ENCODE measurements at regions of chr16 and their contacts with region 1.

Region 1: GRCh38 chr16:70380861-70381603 is 34.3 kb downstream of the DDX19A start:
- DNase-seq: peak; percentile 99
- H3K4me3 ChIP-seq: peak overlapping the region; percentile 85
- H3K4me3 Mint-ChIP-seq: peak overlapping the region; percentile 92
- H3K27ac Mint-ChIP-seq: peak overlapping the region; percentile 97
- H3K4me1 ChIP-seq: peaks cover 9% of the 10 kb centered on the region; the same call in 1 of the 2 replicates
- H3K4me1 Mint-ChIP-seq: peaks cover 6% of the 10 kb centered on the region
- H3K27me3 ChIP-seq: no peaks in the 10 kb centered on the region
- H3K27me3 Mint-ChIP-seq: no peaks in the 10 kb centered on the region
- CTCF ChIP-seq: peak; percentile 35 to 75

Region 2: DNA sequence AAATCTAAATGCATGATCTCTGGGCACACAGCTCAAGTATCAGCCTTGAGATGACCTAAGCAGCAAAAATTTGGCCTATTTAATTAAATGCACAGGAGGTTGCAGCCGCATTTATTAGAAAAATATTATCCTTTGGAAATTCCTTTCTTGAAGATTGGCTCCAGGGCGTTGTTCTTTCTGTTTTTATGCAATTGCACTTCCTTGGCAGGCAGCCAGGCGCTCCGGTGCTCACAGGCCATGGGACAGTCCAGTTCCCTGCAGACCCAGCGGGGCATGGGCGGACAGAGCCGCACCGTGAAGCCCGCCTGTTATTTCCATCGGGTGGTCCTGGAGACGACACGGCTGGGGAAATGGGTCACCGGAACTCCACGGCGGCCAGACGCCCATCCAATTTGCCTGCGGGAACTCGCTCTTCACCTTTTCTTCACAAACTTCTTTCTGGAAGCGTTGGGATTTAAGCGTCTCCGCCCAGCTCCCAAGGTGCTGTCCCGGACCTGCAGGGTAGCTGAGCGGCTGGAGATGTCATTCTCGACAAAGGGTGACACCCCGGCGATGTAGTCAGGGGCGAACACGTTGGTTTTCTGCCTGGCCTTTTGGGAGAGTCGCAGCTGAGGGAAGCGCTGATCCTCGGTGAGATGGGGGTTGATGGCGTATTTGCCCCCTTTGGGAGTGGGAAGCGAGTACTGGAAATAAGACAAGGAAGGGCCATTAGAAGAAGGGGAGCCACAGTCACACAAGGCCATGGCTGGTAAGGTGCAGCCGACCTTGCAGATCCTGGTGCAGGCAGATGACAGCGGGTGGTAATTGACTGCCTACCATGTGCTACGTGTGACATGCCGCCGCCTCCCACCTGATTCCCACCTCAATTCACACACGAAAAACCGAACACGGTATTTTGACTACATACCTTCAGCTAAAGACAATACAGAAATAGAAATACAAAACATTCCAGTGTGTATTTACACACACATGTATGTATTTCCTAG is 638.8 kb before region 1 on chr16:
- CTCF ChIA-PET with region 1: no interaction called
- POLR2A ChIA-PET with region 1: no interaction called
- intact Hi-C with region 1: no loop called
- DNase-seq: no peak
- H3K4me3 ChIP-seq: no peak overlapping the region
- H3K4me3 Mint-ChIP-seq: no peak overlapping the region
- H3K27ac Mint-ChIP-seq: no peak overlapping the region
- H3K4me1 ChIP-seq: no peaks in the 10 kb centered on the region
- H3K4me1 Mint-ChIP-seq: no peaks in the 10 kb centered on the region
- H3K27me3 ChIP-seq: no peaks in the 10 kb centered on the region
- H3K27me3 Mint-ChIP-seq: no peaks in the 10 kb centered on the region
- CTCF ChIP-seq: no peak

Region 3: GRCh38 chr16:70395345-70395901 is 14.4 kb after region 1 on chr16:
- CTCF ChIA-PET with region 1: interaction called, 10 read pairs
- POLR2A ChIA-PET with region 1: interaction called, 15 read pairs
- intact Hi-C with region 1: no loop called
- DNase-seq: peak; percentile 87 to 90
- H3K4me3 ChIP-seq: no peak overlapping the region
- H3K4me3 Mint-ChIP-seq: no peak overlapping the region
- H3K27ac Mint-ChIP-seq: no peak overlapping the region
- H3K4me1 ChIP-seq: peaks cover 20% of the 10 kb centered on the region
- H3K4me1 Mint-ChIP-seq: peaks cover 7% of the 10 kb centered on the region
- H3K27me3 ChIP-seq: no peaks in the 10 kb centered on the region
- H3K27me3 Mint-ChIP-seq: no peaks in the 10 kb centered on the region
- CTCF ChIP-seq: peak; percentile 92 to 95

Region 4: DNA sequence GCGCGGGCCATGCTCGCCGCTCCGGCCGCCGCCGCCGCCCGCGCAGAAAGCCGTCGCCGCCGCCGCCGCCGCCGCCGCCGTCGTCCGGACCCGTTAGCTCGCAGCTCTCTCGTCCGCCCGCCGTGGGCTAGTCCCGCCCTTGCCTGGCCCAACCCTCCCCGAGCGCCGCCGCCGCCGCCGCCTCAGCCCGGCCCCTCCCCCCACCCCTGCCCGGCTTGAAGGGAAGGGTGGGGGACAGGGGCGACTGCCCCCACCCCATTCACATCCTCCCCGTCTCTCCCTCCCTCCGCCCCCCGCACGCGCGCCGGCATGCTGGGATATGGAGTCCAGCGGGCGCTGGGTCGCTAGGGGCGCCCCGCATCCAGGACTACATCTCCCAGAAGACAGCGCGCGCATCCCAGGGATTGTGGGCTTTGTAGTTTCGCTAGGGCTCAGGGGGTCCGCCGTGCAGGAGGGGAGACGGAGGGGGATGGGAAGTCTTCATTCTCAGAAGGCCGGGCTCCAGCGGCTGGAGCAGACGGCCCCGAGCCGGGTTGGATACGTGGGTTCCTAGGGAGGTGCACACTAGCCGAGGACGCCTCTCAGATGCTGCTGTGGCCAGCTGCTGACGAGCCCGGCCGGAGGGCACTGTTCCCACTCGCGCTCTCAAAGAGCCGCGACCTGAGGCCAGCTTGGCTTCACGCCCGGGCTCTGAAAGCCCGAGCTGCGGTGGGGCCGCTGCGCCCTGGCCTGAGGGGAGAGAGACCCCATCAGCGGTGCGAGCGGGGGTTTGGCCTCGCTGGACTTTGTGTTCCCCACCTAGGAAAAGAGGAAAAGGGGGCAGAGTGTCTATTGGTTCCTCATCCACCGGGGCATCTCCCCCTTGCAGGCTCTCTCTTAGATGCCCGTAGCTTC is 58.2 kb after region 1 on chr16 and contains the start of gene ST3GAL2:
- CTCF ChIA-PET with region 1: interaction called, 12 read pairs
- POLR2A ChIA-PET with region 1: interaction called, 6 read pairs
- intact Hi-C with region 1: loop called (anchors 1 kb)
- DNase-seq: peak; percentile 96 to 97
- H3K4me3 ChIP-seq: peak within 1 kb of the TSS; percentile 90
- H3K4me3 Mint-ChIP-seq: peak within 1 kb of the TSS; percentile 92
- H3K27ac Mint-ChIP-seq: peak within 1 kb of the TSS; percentile 67
- H3K4me1 ChIP-seq: peaks cover 45% of the 10 kb centered on the region
- H3K4me1 Mint-ChIP-seq: peaks cover 20% of the 10 kb centered on the region
- H3K27me3 ChIP-seq: no peaks in the 10 kb centered on the region
- H3K27me3 Mint-ChIP-seq: no peaks in the 10 kb centered on the region
- CTCF ChIP-seq: peak; percentile 23 to 46
- total RNA-seq, gene ST3GAL2: 30.3 and 31.1 TPM in 2 replicates

Region 5: GRCh38 chr16:70470927-70471341 is 89.9 kb after region 1 on chr16:
- CTCF ChIA-PET with region 1: interaction called, 42 read pairs
- POLR2A ChIA-PET with region 1: interaction called, 14 read pairs
- intact Hi-C with region 1: loop called (anchors 2 kb)
- DNase-seq: peak; percentile 71 to 80
- H3K4me3 ChIP-seq: no peak overlapping the region
- H3K4me3 Mint-ChIP-seq: no peak overlapping the region
- H3K27ac Mint-ChIP-seq: peak overlapping the region; percentile 36
- H3K4me1 ChIP-seq: peaks cover 8% of the 10 kb centered on the region; the same call in 1 of the 2 replicates
- H3K4me1 Mint-ChIP-seq: peaks cover 7% of the 10 kb centered on the region
- H3K27me3 ChIP-seq: no peaks in the 10 kb centered on the region
- H3K27me3 Mint-ChIP-seq: no peaks in the 10 kb centered on the region
- CTCF ChIP-seq: peak; percentile 82 to 86

Region 6: GRCh38 chr16:70653809-70654771 is 273.1 kb after region 1 on chr16:
- CTCF ChIA-PET with region 1: no interaction called
- POLR2A ChIA-PET with region 1: no interaction called
- intact Hi-C with region 1: loop called (anchors 5 kb)
- DNase-seq: peak; percentile 81 to 91
- H3K4me3 ChIP-seq: no peak overlapping the region
- H3K4me3 Mint-ChIP-seq: peak overlapping the region; percentile 49
- H3K27ac Mint-ChIP-seq: no peak overlapping the region
- H3K4me1 ChIP-seq: no peaks in the 10 kb centered on the region
- H3K4me1 Mint-ChIP-seq: peaks cover 12% of the 10 kb centered on the region
- H3K27me3 ChIP-seq: no peaks in the 10 kb centered on the region
- H3K27me3 Mint-ChIP-seq: no peaks in the 10 kb centered on the region
- CTCF ChIP-seq: peak; percentile 88 to 90

Measured in Caco-2 (cell line).